Activated naive CD4-positive, alpha-beta T cell treated with anti-CD3 and anti-CD28 coated beads for 36 hours (primary cell): ENCODE measurements at regions of chr17 and their contacts with region 1.

Region 1: DNA sequence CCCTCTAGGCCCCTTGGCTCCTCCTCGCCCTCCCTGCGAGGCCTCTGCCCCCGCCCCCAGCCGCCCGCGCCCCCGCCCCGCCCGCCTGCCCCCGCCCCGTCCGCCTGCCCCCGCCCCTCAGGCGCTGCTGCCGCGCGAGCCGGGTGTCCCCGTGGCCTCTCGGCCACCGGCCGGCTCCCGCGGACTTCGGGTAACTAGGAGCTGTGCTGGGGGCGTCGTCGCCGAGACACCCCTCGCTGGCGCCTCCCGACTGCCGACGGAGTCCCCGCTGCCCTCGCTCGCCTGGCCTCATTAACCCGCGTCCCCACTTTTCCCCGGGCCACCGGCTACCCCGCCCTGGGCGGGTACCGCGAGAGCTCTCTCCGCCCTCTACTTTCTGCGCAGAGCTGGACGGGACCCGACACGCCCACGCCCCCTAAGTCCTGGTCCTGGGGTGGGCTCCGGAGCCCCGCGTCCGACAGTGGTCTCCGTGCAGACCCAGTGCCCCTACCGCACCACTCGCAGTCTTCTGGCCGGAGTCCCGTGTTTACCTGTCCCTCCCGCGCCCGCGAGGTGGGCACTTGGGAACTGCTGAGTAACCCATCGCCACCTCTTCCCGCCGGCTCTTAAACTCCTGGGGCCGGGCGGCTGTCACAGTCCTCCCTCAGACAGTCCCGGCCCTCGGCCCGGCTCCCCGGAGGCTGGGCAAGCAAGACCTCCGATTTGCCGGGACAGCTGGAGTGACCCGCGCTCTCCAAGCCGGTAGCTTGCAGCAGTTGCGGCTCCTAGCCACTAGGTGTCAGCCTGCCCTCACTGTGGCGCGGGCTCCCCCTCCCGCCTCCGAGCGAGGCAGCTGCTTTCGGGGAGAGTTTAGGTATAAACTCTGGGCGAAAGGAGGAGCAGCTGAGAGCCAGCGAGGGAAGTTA is at the start of gene TLCD1:
- DNase-seq: peak; percentile 96
- H3K4me3 Mint-ChIP-seq: peak within 1 kb of the TSS; percentile 91
- H3K27ac Mint-ChIP-seq: peak within 1 kb of the TSS; percentile 99
- H3K4me1 Mint-ChIP-seq: peaks cover 42% of the 10 kb centered on the region
- H3K27me3 Mint-ChIP-seq: no peaks in the 10 kb centered on the region
- total RNA-seq, gene TLCD1: 4.0 to 4.6 TPM

Region 2: GRCh38 chr17:28615260-28615940 is 111.1 kb before region 1 on chr17:
- CTCF ChIA-PET with region 1: no interaction called
- intact Hi-C with region 1: no loop called
- DNase-seq: no peak
- H3K4me3 Mint-ChIP-seq: no peak overlapping the region
- H3K27ac Mint-ChIP-seq: no peak overlapping the region
- H3K4me1 Mint-ChIP-seq: peaks cover 3% of the 10 kb centered on the region
- H3K27me3 Mint-ChIP-seq: no peaks in the 10 kb centered on the region

Region 3: DNA sequence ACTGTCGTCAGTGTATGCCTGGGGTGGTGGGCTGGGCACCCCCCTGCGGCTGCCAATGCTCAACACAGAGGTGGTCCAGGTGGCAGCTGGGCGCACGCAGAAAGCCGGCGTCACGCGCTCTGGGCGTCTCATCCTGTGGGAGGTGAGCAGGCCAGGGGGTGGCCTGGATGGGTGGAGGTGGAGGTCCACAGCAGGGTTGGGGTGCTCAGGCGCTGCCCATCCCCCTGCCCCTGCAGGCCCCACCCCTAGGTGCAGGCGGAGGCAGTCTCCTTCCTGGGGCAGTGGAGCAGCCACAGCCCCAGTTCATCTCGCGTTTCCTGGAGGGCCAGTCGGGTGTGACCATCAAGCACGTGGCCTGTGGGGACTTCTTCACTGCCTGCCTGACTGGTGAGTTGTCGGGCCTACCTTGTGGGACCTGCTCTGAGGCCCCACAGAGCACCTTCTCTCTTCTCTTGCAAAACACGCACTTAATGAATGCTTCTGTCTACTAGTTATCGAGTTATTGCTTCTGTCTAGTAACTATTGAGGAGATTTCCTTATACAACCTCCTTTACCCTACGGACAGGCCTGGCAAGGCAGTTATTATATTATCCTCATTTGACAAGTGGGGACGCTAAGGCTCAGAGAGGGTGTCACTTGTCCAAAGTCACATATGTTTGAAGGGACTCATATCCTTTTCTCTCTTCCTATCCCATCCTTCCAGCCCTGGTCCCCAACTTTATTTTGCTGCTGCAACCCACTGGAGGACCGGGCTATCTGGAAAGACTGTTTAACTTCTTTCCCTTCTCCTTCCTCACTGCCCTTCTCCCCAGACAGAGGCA is 11.6 kb after region 1 on chr17:
- CTCF ChIA-PET with region 1: interaction called, 353 read pairs
- intact Hi-C with region 1: loop called (anchors 1 kb)
- DNase-seq: no peak
- H3K4me3 Mint-ChIP-seq: no peak overlapping the region
- H3K27ac Mint-ChIP-seq: peak overlapping the region; percentile 65
- H3K4me1 Mint-ChIP-seq: peaks cover 26% of the 10 kb centered on the region
- H3K27me3 Mint-ChIP-seq: no peaks in the 10 kb centered on the region

Region 4: DNA sequence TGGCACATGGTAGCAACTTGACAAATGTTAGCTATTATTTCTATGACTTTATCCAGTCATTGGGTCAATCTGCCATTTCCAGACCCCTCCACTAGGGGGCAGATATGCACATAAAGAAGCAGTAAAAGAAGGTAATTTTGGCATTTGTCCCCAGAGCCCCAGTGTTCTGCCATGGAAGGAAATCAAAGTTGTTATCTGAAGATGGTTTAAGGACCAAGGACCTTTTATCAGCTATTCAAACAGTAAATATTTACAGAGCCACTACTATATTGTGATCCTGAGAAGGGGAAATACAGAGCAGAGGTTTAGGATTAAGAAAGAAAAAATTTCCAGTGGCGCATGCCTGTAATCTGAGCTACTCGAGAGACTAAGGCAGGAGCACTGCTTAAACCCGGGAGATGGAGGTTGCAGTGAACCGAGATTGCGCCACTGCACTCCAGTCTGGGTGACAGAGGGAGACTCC is 37.4 kb after region 1 on chr17:
- CTCF ChIA-PET with region 1: interaction called, 56 read pairs
- intact Hi-C with region 1: loop called (anchors 5 kb)
- DNase-seq: peak; percentile 93
- H3K4me3 Mint-ChIP-seq: no peak overlapping the region
- H3K27ac Mint-ChIP-seq: no peak overlapping the region
- H3K4me1 Mint-ChIP-seq: peaks cover 12% of the 10 kb centered on the region
- H3K27me3 Mint-ChIP-seq: no peaks in the 10 kb centered on the region

Region 5: GRCh38 chr17:28878981-28879380 is 152.5 kb after region 1 on chr17:
- CTCF ChIA-PET with region 1: interaction called, 5 read pairs
- intact Hi-C with region 1: loop called (anchors 1 kb)
- DNase-seq: peak; percentile 55
- H3K4me3 Mint-ChIP-seq: no peak overlapping the region
- H3K27ac Mint-ChIP-seq: peak overlapping the region; percentile 8
- H3K4me1 Mint-ChIP-seq: peaks cover 37% of the 10 kb centered on the region
- H3K27me3 Mint-ChIP-seq: no peaks in the 10 kb centered on the region

Region 6: DNA sequence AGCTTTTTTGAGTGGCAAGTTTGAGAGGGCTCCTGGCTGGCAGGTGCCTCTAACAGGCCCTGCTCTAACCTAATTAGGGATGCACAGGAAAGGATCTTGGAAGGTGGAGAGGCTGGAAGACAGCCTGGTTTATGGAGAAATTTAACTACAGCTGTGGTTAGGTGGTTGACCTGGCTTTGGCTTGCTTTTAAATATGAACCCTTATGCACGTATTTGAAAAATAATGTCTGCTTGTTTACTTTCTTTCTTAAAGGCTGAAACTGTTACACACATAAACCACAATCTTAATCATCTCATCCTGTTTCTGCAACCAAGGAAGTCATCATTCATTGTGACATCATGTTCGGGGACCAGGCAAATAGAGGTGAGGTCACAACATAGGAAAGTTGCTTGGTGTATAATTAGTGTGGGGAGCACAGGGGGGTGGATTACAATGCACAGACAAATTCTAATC is 199.5 kb after region 1 on chr17:
- CTCF ChIA-PET with region 1: interaction called, 4 read pairs
- intact Hi-C with region 1: loop called (anchors 1 kb)
- DNase-seq: peak; percentile 58
- H3K4me3 Mint-ChIP-seq: no peak overlapping the region
- H3K27ac Mint-ChIP-seq: peak overlapping the region; percentile 76
- H3K4me1 Mint-ChIP-seq: peaks cover 63% of the 10 kb centered on the region
- H3K27me3 Mint-ChIP-seq: no peaks in the 10 kb centered on the region

Region 7: DNA sequence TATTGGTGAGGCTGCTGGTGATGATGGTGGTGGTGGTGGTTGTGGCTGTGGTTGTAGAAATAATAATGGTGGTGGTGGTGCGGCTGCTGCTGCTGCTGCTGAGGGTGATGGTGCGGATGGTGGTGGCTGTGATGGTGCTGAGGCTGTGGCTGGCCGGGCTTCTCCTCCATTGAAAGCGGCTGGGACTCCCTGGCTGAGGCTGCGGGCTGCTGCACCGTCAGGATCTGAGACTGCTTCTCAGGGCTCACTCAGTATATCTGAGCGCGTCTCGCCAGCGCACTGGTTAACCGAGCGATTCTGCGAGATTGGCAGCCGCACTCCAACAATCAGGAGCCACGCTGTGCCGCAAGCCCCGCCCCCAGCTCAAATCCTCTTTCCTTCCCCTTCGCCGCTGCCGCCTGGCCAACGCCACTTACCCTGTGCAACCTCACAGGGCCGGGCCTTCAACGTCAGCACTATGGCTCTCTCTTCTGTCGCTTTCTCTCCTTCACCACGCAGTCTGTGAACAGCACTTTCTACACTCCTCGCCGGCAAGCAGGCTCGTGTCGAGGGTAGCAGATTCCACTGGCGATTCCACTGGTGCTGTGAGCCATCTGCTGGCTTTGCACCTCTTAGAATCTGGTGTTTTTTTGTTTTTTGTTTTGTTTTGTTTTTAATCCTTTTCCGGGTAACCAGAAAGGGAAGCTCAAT is 567.6 kb after region 1 on chr17 and contains the start of gene NUFIP2:
- CTCF ChIA-PET with region 1: no interaction called
- intact Hi-C with region 1: loop called (anchors 5 kb)
- DNase-seq: peak; percentile 99
- H3K4me3 Mint-ChIP-seq: peak within 1 kb of the TSS; percentile 100
- H3K27ac Mint-ChIP-seq: peak within 1 kb of the TSS; percentile 99
- H3K4me1 Mint-ChIP-seq: peaks cover 25% of the 10 kb centered on the region
- H3K27me3 Mint-ChIP-seq: no peaks in the 10 kb centered on the region
- total RNA-seq, gene NUFIP2: 51.0 to 57.8 TPM